Esophagus muscularis mucosa (tissue), 4 donors: ENCODE measurements at regions of chr11 and their contacts with region 1.

Region 1: GRCh38 chr11:65225279-65226102 is 36.3 kb upstream of the POLA2 start:
- DNase-seq: no peak
- H3K4me3 ChIP-seq: peak overlapping the region; percentile 47 to 64 (median 50)
- H3K27ac ChIP-seq: peak overlapping the region; percentile 38 to 58 (median 57)
- H3K4me1 ChIP-seq: peaks cover 14 to 20% (median 18%) of the 10 kb centered on the region in 4 donors
- H3K27me3 ChIP-seq: no peaks in the 10 kb centered on the region
- CTCF ChIP-seq: peak; percentile 33 to 61 (median 55)
- EP300 ChIP-seq: no peak
- POLR2A ChIP-seq: no peak

Region 2: GRCh38 chr11:65266210-65266609 is 40.7 kb after region 1 on chr11:
- intact Hi-C with region 1: loop called (anchors 5 kb)
- DNase-seq: no peak
- H3K4me3 ChIP-seq: no peak overlapping the region
- H3K27ac ChIP-seq: no peak overlapping the region
- H3K4me1 ChIP-seq: peaks cover 8 to 23% (median 14%) of the 10 kb centered on the region in 4 donors
- H3K27me3 ChIP-seq: no peaks in the 10 kb centered on the region
- CTCF ChIP-seq: peak in 1 of 3 experiments; percentile 42
- EP300 ChIP-seq: no peak
- POLR2A ChIP-seq: no peak